ENCODE measurements at regions of chr21 and their contacts with region 1.

Region 1: DNA sequence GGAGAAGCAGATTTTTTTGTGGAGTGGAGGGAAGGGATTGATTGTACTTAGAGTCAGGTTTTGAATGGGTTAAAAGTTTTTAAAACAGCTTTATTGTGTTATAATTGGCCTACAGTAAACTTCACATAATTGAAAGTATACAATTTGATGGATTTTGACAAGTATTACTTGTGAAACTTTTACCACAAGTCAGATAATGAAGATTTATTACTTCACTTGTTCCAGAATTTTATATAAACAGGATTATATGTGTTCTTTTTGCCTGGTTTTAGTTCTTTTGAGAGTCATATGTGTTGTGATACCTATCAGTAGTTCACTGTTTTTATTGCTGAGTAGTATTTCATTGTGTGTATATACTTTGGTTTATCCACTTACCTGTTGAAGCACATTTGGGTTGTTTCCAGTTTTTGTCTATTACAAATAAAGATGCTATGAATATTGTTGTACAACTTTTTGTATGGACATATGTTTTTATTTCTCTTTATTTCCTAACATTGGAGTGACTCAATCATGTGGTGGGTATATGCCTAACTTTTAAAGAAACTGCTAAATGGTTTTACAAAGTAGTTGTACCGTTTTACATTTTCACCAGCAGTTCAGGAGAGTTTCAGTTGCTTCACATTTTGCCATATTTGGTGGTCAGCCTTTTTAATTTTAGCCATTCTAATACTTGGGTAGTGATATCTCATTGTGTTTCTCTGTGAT is 71.0 kb downstream of the DYRK1A start:
- DNase-seq: no peak
- ATAC-seq: no peak
- H3K4me3 ChIP-seq: no peak overlapping the region
- H3K27ac ChIP-seq: peak overlapping the region; percentile 36 to 83 (median 81)
- H3K4me1 ChIP-seq: peaks cover 82 to 89% of the 10 kb centered on the region in 2 donors
- H3K27me3 ChIP-seq: no peaks in the 10 kb centered on the region
- CTCF ChIP-seq: no peak
- POLR2A ChIP-seq: no peak

Region 2: DNA sequence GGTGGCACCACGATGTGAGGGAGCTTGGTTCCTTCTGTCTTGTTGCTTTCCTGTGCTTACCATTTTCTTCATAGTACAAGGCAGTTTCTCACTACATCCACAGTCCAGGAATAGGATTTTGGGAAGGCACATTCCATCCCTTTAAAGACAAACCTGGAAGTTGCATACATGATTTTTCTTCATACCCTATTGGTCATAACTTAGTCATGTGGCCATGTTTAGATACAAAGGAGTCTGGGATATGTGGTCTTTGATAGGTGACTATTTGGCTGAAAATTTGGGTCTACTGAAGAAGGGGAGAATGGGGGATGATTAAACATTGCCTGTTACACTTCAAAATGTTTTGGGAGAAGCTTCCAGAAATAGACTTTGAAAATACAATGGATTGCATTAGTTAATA is 64.0 kb before region 1 on chr21:
- in situ Hi-C with region 1: no loop called
- intact Hi-C with region 1: loop called (anchors 2 kb)
- DNase-seq: no peak
- ATAC-seq: no peak
- H3K4me3 ChIP-seq: no peak overlapping the region
- H3K27ac ChIP-seq: peak overlapping the region; percentile 99 to 100 (median 100)
- H3K4me1 ChIP-seq: peaks cover 87 to 93% of the 10 kb centered on the region in 2 donors
- H3K27me3 ChIP-seq: no peaks in the 10 kb centered on the region
- CTCF ChIP-seq: no peak
- POLR2A ChIP-seq: no peak

Region 3: GRCh38 chr21:37452227-37452626 is 14.7 kb after region 1 on chr21:
- in situ Hi-C with region 1: no loop called
- intact Hi-C with region 1: loop called (anchors 2 kb)
- DNase-seq: peak; percentile 47 to 76
- ATAC-seq: peak; percentile 82 to 86
- H3K4me3 ChIP-seq: no peak overlapping the region
- H3K27ac ChIP-seq: peak overlapping the region; percentile 78 to 86 (median 80)
- H3K4me1 ChIP-seq: peaks cover 90 to 93% of the 10 kb centered on the region in 2 donors
- H3K27me3 ChIP-seq: no peaks in the 10 kb centered on the region
- CTCF ChIP-seq: no peak
- POLR2A ChIP-seq: no peak